ENCODE measurements at regions of chr2 and their contacts with region 1.

Region 1: GRCh38 chr2:27683390-27684071 is 19.8 kb downstream of the SLC4A1AP start:
- DNase-seq: peak; percentile 78
- H3K4me3 ChIP-seq: peak overlapping the region in 1 of 2 experiments; percentile 34; a peak in 1 of 4 replicates
- H3K27ac ChIP-seq: peak overlapping the region in 1 of 2 experiments; percentile 93; a peak in 2 of 4 replicates
- H3K4me1 ChIP-seq: peaks cover 0 to 19% of the 10 kb centered on the region in 2 experiments; a peak in 2 of 4 replicates
- H3K27me3 ChIP-seq: no peaks in the 10 kb centered on the region
- CTCF ChIP-seq: peak; percentile 100
- EP300 ChIP-seq: no peak
- RAD21 ChIP-seq: peak; percentile 83

Region 2: DNA sequence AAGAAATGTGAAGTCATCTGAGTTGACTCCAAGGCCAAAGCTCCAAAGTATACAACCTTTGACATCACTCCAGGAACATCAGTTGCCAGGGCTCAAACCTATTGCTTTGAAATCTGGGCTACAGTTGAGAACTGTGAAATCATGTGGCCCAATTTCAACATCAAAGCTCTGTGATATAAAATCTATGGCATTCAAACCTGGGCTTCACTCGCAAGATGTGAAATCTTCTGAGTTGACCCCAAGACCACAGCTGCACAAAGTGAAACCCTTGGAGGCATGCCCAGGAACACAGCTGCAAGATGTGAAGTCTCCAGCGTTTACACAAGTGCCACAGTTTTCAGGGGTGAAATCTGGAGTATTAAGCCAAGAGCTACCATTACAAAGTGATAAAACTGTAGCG is 110.1 kb before region 1 on chr2:
- CTCF ChIA-PET with region 1: interaction called, 10 read pairs
- POLR2A ChIA-PET with region 1: no interaction called
- DNase-seq: no peak
- H3K4me3 ChIP-seq: no peak overlapping the region
- H3K27ac ChIP-seq: no peak overlapping the region
- H3K4me1 ChIP-seq: no peaks in the 10 kb centered on the region
- H3K27me3 ChIP-seq: no peaks in the 10 kb centered on the region
- CTCF ChIP-seq: no peak
- EP300 ChIP-seq: no peak
- RAD21 ChIP-seq: no peak

Region 3: DNA sequence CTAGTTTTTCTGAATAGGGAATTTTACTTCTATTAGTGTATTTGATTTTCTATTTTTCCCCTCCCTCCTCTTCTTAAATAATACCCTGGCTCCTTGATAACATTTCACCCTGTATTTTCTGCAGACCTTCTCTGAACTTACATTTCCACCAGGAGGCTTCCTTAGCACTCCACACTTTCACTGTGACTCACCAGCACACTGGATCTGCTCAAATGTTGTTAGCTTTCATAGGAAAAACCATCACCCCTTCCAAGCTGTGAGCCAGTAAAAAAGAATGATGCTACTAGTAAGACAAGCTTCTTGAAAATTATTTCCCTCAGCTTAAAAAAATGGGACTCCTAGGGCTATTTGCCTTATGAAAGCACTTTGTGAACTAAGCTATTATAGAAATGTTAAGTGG is 36.2 kb before region 1 on chr2:
- CTCF ChIA-PET with region 1: interaction called, 77 read pairs
- POLR2A ChIA-PET with region 1: no interaction called
- DNase-seq: no peak
- H3K4me3 ChIP-seq: no peak overlapping the region
- H3K27ac ChIP-seq: 0 out of 4 replicates have a peak overlapping the region, but pooled peaks of 1 of the 2 experiments have one; percentile 15
- H3K4me1 ChIP-seq: peaks cover 0 to 2% of the 10 kb centered on the region in 2 experiments; a peak in 1 of 4 replicates
- H3K27me3 ChIP-seq: no peaks in the 10 kb centered on the region
- CTCF ChIP-seq: no peak
- EP300 ChIP-seq: no peak
- RAD21 ChIP-seq: no peak

Region 4: GRCh38 chr2:27672723-27673486 is 10.6 kb before region 1 on chr2:
- CTCF ChIA-PET with region 1: interaction called, 146 read pairs
- POLR2A ChIA-PET with region 1: no interaction called
- DNase-seq: no peak
- H3K4me3 ChIP-seq: no peak overlapping the region
- H3K27ac ChIP-seq: no peak overlapping the region
- H3K4me1 ChIP-seq: no peaks in the 10 kb centered on the region
- H3K27me3 ChIP-seq: no peaks in the 10 kb centered on the region
- CTCF ChIP-seq: no peak
- EP300 ChIP-seq: no peak
- RAD21 ChIP-seq: no peak

Region 5: DNA sequence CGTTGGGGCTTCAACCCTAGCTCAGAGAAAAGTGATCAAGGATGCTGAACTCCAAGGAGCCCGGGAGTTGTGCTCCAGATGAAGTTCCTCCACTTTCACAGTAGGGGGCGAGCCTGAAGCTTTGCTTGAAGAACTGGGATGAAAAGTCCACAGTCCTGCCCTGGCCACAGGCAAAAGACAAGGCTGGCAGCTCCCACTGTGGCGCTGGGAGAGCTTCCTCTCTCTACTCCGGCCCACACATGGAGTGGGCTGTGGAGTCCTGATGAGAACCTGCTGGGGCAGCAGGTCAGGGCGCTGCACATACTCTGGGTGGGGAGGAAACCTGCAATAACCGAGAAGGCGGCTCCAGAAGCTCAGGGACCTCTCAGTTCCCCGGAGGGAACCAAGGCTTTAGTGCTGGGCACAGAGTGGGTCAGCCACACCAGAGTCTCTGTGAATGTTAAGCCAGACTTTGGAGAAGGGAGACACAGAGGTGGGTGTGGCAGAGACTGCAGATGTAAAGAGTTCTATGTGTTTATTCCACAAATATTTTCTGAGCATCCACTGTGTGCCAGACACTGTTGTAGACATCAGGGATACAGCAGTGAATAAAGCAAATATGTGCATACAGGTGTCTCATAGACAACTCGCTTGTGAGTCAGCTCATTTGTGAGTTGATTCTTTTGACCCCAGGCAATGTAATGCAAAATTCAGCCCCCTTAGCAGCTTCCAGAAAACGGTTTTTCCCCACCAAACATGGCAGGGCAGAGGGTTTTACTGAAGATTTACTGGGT is 40.0 kb after region 1 on chr2:
- CTCF ChIA-PET with region 1: interaction called, 18 read pairs
- POLR2A ChIA-PET with region 1: no interaction called
- DNase-seq: peak; percentile 85
- H3K4me3 ChIP-seq: no peak overlapping the region; a peak in 1 of 4 replicates
- H3K27ac ChIP-seq: no peak overlapping the region
- H3K4me1 ChIP-seq: peaks cover 7 to 24% of the 10 kb centered on the region in 2 experiments; a peak in 3 of 4 replicates
- H3K27me3 ChIP-seq: no peaks in the 10 kb centered on the region
- CTCF ChIP-seq: peak; percentile 84
- EP300 ChIP-seq: no peak
- RAD21 ChIP-seq: peak; percentile 83